ENCODE measurements at regions of chr17 and their contacts with region 1.

Region 1: DNA sequence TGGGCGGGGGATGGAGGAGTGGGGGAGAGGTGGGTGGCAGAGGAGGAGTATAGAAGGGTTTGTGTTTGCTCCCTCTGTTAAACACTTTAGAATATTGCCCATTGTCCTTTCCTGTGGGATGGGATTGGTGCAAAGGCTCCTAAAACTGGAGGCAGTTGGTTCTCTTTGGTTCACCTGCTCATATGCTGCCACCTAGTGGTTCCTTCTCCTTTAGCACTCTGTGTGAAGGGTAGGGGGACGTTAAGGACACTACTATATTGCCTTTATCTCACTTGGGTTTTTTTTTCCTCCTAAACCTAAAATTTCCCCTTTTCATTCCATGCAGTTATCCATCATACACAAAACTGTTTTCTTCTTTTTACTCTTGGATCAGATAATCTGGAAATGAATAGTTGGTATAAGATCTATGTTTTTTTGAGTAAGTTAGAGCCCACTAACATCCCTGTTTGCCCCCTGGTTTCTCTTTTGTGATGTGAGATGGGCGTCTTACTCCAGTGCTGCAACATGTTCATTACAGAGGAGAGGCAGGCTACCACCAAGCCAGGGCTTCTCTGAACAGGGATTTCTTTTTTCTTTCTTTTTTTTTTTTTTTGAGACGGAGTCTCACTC is 23.8 kb downstream of the SNX11 start:
- DNase-seq: peak; percentile 63
- H3K4me3 ChIP-seq: no peak overlapping the region
- H3K27ac ChIP-seq: no peak overlapping the region
- H3K4me1 ChIP-seq: peaks cover 15% of the 10 kb centered on the region
- H3K27me3 ChIP-seq: peaks cover 0 to 2% of the 10 kb centered on the region in 2 experiments
- CTCF ChIP-seq: peak; percentile 75 to 81
- POLR2A ChIP-seq: no peak

Region 2: DNA sequence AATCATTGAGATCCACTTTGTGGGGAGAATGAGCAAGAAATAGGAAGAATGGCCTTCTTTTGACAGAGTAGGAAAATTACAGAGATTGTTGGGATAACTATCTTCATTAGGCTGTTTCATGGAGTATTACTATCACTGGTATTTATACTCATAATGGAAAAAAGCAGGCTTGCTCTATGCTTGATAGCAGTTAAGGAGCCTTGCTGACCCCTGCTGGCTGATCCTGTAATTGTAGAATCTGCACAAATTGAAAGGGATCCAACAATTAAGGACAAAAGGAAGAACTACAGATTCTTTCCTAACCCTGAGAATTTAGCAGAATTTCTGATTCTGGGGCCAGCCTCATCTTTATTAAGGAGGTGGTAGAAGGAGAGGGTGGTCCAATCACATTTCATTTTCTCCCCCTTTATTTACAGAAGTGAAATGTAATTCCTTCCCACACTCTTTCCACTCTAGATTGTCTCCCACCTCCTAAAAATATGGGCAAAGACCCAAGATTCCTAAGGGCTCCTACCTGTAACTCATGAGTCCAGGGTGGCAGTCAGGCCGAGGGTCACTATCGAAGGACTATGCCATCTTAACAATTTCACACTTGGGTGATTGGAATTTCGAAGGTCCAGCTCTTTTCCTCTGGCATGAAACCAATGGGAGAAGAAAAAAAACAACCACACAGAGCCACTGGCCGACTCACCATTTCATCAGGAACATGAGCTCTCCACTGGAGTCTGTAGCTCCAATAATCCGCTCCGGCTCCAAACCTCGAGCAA is 56.8 kb before region 1 on chr17:
- CTCF ChIA-PET with region 1: interaction called, 167 read pairs
- POLR2A ChIA-PET with region 1: no interaction called
- dilution Hi-C with region 1: no loop called
- intact Hi-C with region 1: loop called (anchors 2 kb)
- DNase-seq: peak; percentile 88
- H3K4me3 ChIP-seq: no peak overlapping the region
- H3K27ac ChIP-seq: no peak overlapping the region
- H3K4me1 ChIP-seq: no peaks in the 10 kb centered on the region
- H3K27me3 ChIP-seq: no peaks in the 10 kb centered on the region
- CTCF ChIP-seq: peak; percentile 63 to 69
- POLR2A ChIP-seq: no peak

Region 3: DNA sequence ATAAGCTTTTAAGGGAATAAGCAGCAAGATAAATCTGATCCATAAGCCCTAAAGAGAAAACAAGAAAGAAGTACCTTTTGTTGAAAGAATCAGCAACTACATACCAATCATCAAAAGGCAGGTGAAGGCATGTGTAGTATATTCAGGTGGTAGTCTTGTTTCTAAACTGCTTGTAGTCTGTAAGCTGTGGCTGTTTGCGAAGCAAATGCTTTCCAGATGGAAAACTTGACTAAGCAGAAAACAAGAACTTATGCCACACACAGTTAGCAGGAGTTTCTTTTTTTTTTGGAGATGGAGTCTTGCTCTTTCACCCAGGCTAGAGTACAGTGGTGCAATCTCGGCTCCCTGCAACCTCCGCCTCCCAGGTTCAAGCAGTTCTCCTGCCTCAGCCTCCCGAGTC is 35.7 kb before region 1 on chr17:
- CTCF ChIA-PET with region 1: interaction called, 12 read pairs
- POLR2A ChIA-PET with region 1: no interaction called
- dilution Hi-C with region 1: no loop called
- intact Hi-C with region 1: no loop called
- DNase-seq: no peak
- H3K4me3 ChIP-seq: no peak overlapping the region
- H3K27ac ChIP-seq: no peak overlapping the region
- H3K4me1 ChIP-seq: peaks cover 8% of the 10 kb centered on the region
- H3K27me3 ChIP-seq: no peaks in the 10 kb centered on the region
- CTCF ChIP-seq: no peak
- POLR2A ChIP-seq: no peak

Region 4: GRCh38 chr17:48113201-48113676 is 18.1 kb before region 1 on chr17:
- CTCF ChIA-PET with region 1: interaction called, 12 read pairs
- POLR2A ChIA-PET with region 1: no interaction called
- dilution Hi-C with region 1: no loop called
- intact Hi-C with region 1: no loop called
- DNase-seq: no peak
- H3K4me3 ChIP-seq: no peak overlapping the region
- H3K27ac ChIP-seq: no peak overlapping the region
- H3K4me1 ChIP-seq: peaks cover 6% of the 10 kb centered on the region
- H3K27me3 ChIP-seq: no peaks in the 10 kb centered on the region
- CTCF ChIP-seq: no peak
- POLR2A ChIP-seq: no peak

Region 5: DNA sequence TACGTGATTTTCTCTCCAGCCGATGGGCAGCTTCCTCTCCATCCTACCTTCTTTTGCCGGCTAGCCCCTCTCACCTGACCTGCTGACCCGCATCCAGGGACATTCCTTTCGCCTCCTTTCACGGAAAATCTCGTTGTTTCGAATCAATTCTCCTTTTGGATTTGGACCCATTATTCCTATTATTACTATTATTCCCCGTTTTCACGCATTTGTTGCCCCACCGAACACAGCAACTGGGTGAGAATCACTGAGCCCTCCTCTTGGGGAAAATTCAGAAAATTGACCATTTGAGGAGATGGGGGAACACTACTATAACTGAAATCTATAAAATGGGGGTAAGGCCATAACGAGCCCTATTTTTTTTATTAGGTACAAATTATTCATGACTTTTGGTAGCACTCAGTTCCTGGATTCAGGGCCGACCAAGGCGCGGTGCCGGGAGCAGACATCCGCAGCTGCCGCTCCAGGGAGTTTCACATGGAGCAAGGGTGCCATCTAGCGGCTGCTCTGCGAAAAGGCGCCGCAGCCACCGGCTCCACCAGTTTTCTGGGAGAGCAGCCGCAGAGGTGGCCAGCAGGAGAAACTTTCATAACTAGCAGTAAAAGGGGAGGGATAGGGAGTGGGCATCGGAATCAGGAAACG is 487.1 kb after region 1 on chr17:
- CTCF ChIA-PET with region 1: interaction called, 8 read pairs
- POLR2A ChIA-PET with region 1: no interaction called
- dilution Hi-C with region 1: no loop called
- intact Hi-C with region 1: loop called (anchors 5 kb)
- DNase-seq: peak; percentile 83
- H3K4me3 ChIP-seq: peak overlapping the region; percentile 3 to 46 (median 30)
- H3K27ac ChIP-seq: no peak overlapping the region
- H3K4me1 ChIP-seq: peaks cover 27% of the 10 kb centered on the region
- H3K27me3 ChIP-seq: peaks cover 66 to 79% of the 10 kb centered on the region in 2 experiments
- CTCF ChIP-seq: peak; percentile 91 to 99
- POLR2A ChIP-seq: no peak